A673 (cell line): ENCODE measurements at regions of chr2 and their contacts with region 1.

Region 1: DNA sequence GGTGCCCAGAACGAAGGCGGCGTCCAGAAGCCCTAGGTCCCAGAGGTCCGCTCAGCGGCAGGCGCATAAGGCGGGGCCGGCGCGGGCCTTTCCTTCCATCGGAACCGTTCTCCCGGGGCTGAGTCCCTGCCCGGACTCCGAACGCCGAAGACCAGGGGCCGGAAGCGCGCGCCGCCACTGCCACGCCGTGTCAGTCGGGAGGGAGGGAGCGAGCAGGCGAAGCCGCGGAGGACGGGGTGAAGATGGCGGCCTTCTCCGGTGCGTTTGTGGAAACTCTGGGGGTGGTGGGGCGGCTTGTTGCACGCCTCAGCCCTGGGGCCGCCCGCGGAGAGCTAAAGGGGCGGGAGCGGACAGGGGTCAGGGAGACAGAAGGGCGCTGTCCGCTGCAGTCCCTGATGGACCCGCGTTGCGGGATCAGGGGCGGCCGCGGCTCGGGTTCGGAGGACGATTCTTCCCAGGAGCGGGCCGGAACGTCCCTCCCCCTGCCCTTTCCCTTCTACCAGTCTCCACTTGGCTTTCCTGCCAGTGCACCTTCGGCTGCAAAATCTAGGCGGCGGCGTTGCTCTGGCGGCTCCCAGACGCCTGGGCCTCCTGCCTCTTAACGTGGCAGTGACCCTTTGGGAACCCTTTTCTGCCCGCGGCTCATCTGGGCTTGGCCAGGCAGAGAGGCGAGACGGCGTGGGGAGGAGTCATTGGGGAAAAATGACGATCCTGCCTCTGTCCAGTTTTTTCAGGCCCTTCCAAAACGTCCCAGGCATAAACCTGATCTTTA is at the start of gene DDX1:
- DNase-seq: peak; percentile 89
- H3K4me3 ChIP-seq: peak within 1 kb of the TSS; percentile 84
- H3K27ac ChIP-seq: peak within 1 kb of the TSS; percentile 90
- H3K4me1 ChIP-seq: peaks cover 5% of the 10 kb centered on the region
- H3K27me3 ChIP-seq: no peaks in the 10 kb centered on the region
- CTCF ChIP-seq: 0 out of 2 replicates have a peak, but pooled peaks have one; percentile 20
- total RNA-seq, gene DDX1: 152 and 154 TPM in 2 replicates

Region 2: DNA sequence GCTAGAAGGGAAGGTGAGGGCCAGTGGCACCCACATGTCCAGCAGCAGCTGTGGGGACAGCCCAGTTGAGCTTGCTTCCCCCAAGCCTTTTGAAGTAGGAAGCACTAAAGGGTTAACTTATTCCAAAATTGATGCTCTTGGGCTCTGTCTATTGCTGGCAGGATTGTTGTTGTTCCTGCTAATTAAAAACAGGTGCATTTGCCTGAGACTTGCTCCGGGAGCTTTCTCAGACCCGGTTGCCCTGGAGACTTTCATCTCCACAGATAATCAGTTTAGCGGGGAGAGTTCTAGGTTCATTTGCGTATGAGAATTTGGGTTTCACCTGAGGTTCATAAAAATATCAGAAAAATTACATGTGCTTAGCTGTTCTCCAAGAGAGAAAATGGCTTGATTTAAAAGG is 682.1 kb before region 1 on chr2:
- CTCF ChIA-PET with region 1: no interaction called
- POLR2A ChIA-PET with region 1: no interaction called
- intact Hi-C with region 1: loop called (anchors 10 kb)
- DNase-seq: peak; percentile 28
- H3K4me3 ChIP-seq: no peak overlapping the region
- H3K27ac ChIP-seq: no peak overlapping the region
- H3K4me1 ChIP-seq: peaks cover 19% of the 10 kb centered on the region
- H3K27me3 ChIP-seq: peaks cover 54% of the 10 kb centered on the region
- CTCF ChIP-seq: no peak

Region 3: GRCh38 chr2:15560988-15561573 is 30.8 kb before region 1 on chr2 and contains the start of gene NBAS:
- CTCF ChIA-PET with region 1: no interaction called
- POLR2A ChIA-PET with region 1: no interaction called
- intact Hi-C with region 1: loop called (anchors 2 kb)
- DNase-seq: peak; percentile 93
- H3K4me3 ChIP-seq: peak within 1 kb of the TSS; percentile 84
- H3K27ac ChIP-seq: peak within 1 kb of the TSS; percentile 81
- H3K4me1 ChIP-seq: peaks cover 5% of the 10 kb centered on the region
- H3K27me3 ChIP-seq: no peaks in the 10 kb centered on the region
- CTCF ChIP-seq: no peak
- total RNA-seq, gene NBAS: 37.5 and 38.7 TPM in 2 replicates